AG04449 (cell line): ENCODE measurements at regions of chr2 and their contacts with region 1.

Region 1: DNA sequence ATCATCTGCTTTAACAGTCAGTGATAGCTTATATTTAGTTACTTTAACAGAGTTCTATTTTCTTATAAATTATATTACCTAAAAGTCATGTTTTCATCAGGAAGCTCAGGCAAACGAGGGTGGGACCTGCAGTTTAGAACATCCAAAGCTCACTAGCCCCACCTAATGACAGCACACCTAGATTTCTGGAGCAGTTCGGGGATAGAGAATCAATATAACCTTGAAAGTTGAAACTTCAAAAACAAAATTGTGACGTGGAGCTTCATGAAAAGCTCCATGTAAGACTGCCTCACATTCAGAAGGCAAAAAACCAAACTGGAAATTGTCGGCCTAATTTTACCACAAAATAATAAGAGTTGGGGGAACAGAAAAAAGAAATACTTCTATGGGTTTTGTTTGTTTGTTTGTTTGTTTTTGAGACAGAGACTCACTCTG is 185.9 kb upstream of the CCDC150 start:
- DNase-seq: peak; percentile 14
- H3K4me3 ChIP-seq: no peak overlapping the region
- CTCF ChIP-seq: peak; percentile 52

Region 2: DNA sequence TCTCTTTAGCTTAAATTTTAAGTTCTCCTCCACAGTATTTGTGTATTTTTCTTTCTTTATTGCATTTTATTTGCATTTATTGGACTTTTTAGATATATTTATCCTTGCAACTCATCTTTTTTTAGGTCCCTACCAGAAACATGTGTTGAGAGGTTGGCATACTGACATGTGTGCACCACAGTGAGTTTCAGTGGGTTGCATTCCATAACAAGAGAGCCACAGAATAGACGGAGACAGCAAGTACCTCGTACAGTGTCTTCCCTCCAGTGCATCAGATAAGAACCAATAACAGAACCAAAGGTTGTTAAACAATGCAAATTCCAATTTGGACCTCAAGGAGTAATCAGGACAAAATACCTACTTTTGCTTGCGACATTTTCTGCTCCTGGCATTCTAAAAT is 496.9 kb before region 1 on chr2:
- CTCF ChIA-PET with region 1: no interaction called
- POLR2A ChIA-PET with region 1: no interaction called
- DNase-seq: no peak
- H3K4me3 ChIP-seq: no peak overlapping the region
- CTCF ChIP-seq: no peak

Region 3: GRCh38 chr2:196076778-196077568 is 376.7 kb before region 1 on chr2:
- CTCF ChIA-PET with region 1: interaction called, 17 read pairs
- POLR2A ChIA-PET with region 1: no interaction called
- DNase-seq: no peak
- H3K4me3 ChIP-seq: no peak overlapping the region
- CTCF ChIP-seq: no peak

Region 4: DNA sequence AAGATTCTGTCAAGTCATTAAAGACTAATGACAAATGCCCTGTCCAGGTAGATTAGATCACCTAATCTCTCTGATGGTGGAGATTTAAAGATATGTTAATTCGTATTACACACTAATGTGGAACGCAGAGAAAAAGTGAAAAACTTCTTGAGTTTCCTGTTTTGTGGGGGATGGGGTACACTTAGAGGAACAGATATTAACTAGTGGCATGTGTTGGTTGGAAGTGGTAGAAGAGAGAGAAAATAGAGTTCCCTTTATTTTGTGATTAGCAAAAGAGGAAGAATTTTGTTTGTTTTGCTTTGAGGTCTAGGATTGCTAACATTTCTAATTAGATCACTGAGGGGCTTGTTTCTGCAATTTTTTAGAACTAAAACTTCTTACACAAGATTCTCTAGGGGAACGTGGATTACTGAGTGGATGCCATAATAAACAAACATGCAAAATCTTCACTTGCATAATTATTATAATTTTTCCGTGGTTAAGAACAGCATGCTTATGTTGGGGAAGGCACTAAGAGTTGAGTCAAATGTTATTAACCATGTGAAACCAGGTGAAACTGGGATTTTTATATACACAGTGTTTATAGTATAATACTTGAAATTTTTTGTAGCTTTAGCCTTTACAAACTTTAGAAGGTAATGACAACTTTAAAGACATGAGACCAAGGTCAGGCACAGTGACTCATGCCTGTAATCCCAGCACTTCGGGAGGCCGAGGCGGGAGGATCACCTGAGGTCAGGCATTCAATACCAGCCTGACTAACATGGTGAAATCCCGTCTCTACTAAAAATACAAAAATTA is 184.9 kb before region 1 on chr2:
- CTCF ChIA-PET with region 1: no interaction called
- POLR2A ChIA-PET with region 1: no interaction called
- DNase-seq: no peak
- H3K4me3 ChIP-seq: no peak overlapping the region
- CTCF ChIP-seq: no peak

Region 5: DNA sequence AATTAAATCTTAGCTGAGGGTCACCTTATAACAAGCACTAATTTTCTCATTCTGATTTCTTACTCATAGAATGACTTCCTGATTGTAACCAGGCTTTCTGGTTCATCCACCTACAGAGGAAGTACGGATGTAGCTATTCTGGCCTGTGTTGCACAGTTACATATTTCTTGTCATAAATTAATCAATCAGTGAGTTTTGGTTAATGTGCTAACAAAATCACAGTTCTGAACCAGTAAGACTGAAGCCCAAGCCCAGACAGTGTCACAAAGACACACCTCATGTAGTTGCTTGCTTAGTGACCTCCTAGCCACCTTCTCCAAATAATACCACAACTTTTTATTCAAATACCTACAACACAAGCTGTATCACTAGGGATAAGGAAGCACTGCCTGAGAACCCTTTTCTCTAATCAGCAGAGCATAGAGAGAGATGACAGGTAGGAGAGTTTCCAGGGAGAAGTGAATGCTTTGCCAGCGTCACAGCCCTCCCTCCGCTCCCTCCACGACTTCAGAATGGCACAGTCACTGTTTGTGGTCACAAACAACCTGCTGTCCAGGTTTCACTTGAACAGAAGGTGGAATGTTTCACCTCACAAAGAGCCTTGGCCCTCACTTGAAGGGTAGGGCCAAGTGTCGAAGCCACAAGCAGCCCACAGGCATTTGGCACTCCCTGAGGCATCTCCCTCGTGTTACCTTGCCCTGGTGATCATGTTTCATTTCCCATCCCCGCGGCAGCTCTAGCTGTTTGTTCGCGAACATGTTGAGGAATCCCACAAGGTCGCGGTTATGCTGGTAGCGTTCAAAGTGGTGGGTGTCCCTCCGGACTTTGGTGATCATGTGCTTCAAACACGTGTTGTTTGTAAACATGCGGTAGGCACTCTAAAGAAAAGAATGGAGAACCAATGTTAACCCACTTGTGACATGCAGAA is 161.5 kb before region 1 on chr2:
- CTCF ChIA-PET with region 1: interaction called, 29 read pairs
- POLR2A ChIA-PET with region 1: no interaction called
- DNase-seq: no peak
- H3K4me3 ChIP-seq: no peak overlapping the region
- CTCF ChIP-seq: no peak

Region 6: GRCh38 chr2:196344397-196344796 is 109.2 kb before region 1 on chr2:
- CTCF ChIA-PET with region 1: interaction called, 48 read pairs
- POLR2A ChIA-PET with region 1: no interaction called
- DNase-seq: no peak
- H3K4me3 ChIP-seq: no peak overlapping the region
- CTCF ChIP-seq: no peak

Region 7: DNA sequence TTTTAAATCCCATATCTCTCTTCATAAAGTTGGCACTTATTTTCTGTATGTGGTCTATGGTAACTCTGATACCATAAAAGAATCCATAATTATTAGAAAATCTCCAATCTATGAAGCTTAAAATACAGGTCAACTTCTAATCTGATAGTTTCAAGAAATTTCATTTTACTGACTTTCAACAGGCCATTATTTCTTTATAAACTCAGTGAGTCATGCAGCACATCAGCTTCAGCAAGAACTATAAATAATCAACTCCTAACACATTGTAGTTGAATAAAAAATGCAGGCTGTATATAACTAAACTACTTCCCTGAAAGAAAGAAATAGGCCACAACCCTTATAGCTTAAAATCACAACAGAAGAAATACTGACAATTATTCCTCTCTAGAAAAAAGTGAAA is 18.4 kb before region 1 on chr2:
- CTCF ChIA-PET with region 1: interaction called, 16 read pairs
- POLR2A ChIA-PET with region 1: no interaction called
- DNase-seq: peak; percentile 12
- H3K4me3 ChIP-seq: no peak overlapping the region
- CTCF ChIP-seq: no peak